ENCODE measurements at regions of chr2 and their contacts with region 1.

Region 1: DNA sequence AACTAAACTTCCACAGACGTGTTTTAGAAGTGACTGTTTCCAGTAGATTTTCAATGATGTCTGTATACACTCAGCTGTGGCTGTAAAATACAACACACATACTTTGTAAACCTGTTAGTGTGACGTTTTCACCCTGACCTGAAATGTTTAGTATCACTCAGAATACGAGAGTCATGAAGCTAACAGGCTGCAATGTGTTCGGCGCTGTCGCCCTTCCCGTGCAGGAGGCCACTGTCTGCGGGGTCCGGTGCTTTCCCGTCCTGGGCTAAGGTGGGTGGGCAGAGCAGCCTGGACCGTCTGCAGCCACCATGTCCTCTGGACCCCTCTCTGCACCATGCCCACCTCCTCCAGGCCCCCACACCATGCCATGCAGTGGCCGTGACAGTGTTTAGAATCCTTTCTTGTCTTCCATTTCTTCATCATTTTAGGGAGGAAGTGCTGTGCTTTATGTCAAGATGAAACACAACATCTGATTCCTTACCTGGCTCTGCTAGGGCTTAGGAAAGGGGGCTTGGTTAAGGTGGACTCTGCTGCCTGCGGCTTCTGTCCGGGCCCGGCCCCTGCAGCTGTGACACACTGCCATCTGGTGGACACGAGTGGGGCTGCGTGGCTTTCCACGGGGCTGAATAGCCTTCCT is 53.8 kb upstream of the RBM44 start:
- DNase-seq: peak; percentile 57 to 92 (median 91)
- ATAC-seq: peak; percentile 81 to 82
- H3K4me3 ChIP-seq: no peak overlapping the region
- H3K27ac ChIP-seq: no peak overlapping the region
- H3K4me1 ChIP-seq: peaks cover 4% of the 10 kb centered on the region
- H3K27me3 ChIP-seq: no peaks in the 10 kb centered on the region

Region 2: DNA sequence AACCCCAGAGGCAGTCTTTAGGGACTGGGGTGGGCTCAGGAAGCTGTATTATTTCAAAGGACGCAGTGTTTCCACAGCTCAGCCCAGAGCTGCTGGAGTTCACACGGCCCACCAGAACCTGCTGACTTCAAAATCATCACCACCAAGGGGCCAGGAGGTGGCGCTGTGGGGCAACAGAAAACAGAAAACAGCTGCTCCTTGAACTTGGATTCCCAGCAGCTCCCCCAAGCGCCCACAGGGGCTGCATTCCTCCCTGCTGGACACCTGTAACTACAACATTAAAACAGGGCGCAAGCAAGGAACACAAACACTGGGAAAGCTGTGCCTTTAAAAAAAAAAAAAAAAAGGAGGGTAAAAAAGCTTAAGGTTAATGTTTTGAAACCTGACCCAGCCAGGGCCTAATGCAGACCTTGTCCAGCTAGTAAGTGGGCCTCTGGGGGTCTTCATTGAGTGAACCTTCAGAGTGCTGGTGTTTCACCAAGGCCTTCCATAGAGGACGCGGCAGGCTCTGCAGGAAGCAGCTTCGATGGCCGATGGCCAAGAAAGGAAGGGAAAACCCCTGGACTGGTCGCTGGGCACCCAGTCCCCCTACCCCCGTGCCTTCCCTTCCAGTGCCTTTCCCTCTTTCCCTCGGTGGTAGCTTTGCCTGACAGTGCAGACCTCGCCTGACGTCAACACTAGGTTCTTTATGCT is 231.8 kb before region 1 on chr2:
- intact Hi-C with region 1: loop called in 2 of 4 experiments (anchors 10 kb)
- DNase-seq: peak; percentile 86 to 94 (median 92)
- ATAC-seq: peak; percentile 47 to 74
- H3K4me3 ChIP-seq: no peak overlapping the region
- H3K27ac ChIP-seq: peak overlapping the region; percentile 22
- H3K4me1 ChIP-seq: peaks cover 7% of the 10 kb centered on the region
- H3K27me3 ChIP-seq: no peaks in the 10 kb centered on the region

Region 3: DNA sequence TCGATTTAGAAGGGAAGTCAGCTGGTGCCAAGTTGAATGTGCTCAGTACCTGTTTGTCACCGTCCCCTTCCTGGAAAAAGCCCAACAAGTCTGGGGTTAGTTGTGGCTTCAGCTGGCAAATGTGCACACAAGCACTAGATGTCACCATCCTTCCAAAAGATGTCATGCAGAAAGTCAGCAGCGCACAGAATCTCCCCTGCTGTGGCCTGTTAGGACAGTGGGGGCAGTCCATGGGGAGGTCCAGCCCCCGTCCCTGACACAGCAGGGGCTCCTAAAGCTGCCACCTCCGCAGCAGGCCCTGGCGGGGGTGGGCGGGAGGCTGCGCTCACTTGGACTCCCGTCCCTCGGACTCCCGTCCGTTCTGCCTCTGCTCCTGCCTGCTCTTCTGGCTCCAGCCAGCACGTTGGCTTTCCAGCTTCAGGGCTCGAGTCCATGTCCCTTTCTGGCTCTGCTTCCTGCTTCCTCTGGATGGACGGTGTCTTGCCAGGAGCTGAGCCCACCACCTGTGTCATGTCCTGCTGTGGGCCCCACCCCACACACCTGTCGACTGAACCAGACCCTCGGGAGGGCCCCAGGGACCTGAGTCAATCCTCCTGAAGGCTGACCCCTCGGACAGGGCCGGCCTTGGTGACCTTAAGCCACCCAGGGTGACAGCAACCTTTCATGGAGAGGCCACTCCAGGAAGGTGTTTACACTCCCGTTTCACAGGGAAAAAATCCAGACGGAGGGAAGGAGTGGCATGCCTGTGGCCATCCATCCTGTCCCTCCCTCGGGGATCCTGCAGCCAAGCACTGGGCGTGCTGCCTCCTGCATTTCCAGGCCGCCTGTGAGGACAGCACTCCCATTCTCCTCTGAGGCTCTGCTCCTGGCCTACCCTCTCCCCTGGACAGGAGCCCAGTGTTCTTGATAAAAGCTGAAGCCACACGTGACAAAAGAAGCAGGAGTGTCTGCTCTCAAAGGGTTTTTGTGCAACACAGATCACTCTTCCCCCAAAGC is 162.7 kb before region 1 on chr2:
- intact Hi-C with region 1: loop called (anchors 2 to 5 kb)
- DNase-seq: peak; percentile 76 to 92 (median 91)
- ATAC-seq: peak; percentile 90 to 92
- H3K4me3 ChIP-seq: no peak overlapping the region
- H3K27ac ChIP-seq: peak overlapping the region; percentile 54
- H3K4me1 ChIP-seq: no peaks in the 10 kb centered on the region
- H3K27me3 ChIP-seq: no peaks in the 10 kb centered on the region

Region 4: DNA sequence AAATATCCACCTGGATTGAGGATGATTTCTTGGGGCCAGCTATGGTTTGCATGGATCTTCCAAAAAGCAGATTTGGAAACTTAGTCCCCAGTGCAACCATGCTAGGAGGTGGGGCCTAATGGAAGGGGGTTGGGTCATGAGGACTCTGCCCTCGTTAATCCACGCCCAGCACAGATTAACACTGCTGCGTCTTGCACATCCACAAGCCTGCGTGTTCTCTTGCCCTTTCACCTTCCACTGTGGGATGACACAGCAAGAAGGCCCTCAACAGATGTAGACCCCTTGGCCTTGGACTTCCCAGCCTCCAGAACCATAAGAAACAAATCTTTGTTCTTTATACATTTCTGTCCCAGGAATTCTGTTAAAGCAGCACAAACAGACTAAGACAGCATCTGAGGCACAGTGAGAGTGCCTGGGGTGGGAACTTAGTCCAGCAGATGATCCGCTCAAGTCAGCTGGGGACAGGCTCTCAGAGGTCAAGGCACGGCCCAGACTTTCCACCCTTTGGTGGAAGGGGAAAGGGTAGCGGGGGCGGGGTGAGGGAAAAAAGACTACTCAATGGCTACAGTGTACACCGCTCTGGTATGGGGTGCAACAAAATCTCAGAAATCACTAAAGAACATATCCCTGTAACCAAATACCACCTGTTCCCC is 156.6 kb before region 1 on chr2:
- intact Hi-C with region 1: loop called (anchors 2 to 5 kb)
- DNase-seq: no peak
- ATAC-seq: no peak
- H3K4me3 ChIP-seq: no peak overlapping the region
- H3K27ac ChIP-seq: no peak overlapping the region
- H3K4me1 ChIP-seq: peaks cover 5% of the 10 kb centered on the region
- H3K27me3 ChIP-seq: no peaks in the 10 kb centered on the region

Region 5: DNA sequence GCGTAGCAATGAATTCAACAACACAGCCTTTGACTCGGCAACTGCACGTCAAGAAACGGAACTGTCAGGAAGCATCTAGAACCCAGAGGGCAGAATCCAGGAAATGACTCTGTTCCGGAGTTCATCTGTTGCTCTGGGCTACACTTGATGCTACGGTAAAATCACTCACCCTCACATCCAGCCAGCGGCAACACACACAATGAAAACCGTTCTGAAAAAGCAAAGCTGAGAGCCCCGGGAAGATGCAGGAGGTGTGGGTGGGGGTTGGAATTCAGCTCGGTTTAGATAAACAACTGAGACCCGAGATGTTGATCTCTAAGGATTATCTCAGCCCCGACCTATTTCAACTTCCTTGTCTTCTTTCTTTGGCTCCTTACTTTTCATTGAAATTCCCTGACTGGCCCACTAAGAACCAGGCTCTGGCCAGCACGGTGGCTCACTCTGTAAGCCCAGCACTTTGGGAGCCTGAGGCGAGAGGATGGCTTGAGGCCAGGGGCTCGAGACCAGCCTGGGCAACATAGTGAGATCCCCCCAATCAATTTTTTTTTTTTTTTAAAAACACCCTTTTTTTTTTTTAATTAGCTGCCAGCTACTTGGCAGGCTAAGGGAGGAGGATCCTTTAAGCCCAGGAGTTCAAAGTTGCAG is 140.9 kb before region 1 on chr2:
- intact Hi-C with region 1: loop called in 1 of 4 experiments (anchors 5 kb)
- DNase-seq: peak in 1 of 3 donors; percentile 57
- ATAC-seq: peak; percentile 56 to 84
- H3K4me3 ChIP-seq: no peak overlapping the region
- H3K27ac ChIP-seq: no peak overlapping the region
- H3K4me1 ChIP-seq: peaks cover 12% of the 10 kb centered on the region
- H3K27me3 ChIP-seq: no peaks in the 10 kb centered on the region

Region 6: GRCh38 chr2:237674731-237675276 is 69.9 kb before region 1 on chr2:
- intact Hi-C with region 1: loop called in 3 of 4 experiments (anchors 2 to 5 kb)
- DNase-seq: peak; percentile 89 to 94 (median 93)
- ATAC-seq: peak; percentile 90 to 91
- H3K4me3 ChIP-seq: peak overlapping the region; percentile 19
- H3K27ac ChIP-seq: peak overlapping the region; percentile 80
- H3K4me1 ChIP-seq: peaks cover 22% of the 10 kb centered on the region
- H3K27me3 ChIP-seq: no peaks in the 10 kb centered on the region

Region 7: DNA sequence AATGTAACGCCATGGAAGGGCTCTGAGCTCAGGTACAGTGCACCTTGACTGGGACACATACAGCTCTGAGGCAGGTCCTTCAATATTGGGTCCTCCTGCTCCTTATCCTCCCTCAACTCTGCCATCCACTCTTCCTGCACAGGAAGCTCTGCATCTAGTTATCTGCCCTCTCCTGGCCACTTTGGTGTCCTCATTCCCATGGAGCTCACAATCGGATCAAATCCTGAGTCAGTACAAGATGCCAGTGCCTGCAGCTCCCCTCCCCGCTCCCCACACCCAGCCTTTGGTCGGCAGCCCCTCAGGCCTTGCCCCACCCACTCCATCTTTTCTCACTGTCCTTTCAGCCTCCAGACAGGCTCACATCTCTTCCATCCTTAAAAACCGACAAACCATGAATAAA is 59.3 kb before region 1 on chr2:
- intact Hi-C with region 1: loop called in 1 of 4 experiments (anchors 5 kb)
- DNase-seq: no peak
- ATAC-seq: no peak
- H3K4me3 ChIP-seq: no peak overlapping the region
- H3K27ac ChIP-seq: no peak overlapping the region
- H3K4me1 ChIP-seq: peaks cover 14% of the 10 kb centered on the region
- H3K27me3 ChIP-seq: no peaks in the 10 kb centered on the region

Measured in right cardiac atrium (tissue), 5 donors.